ENCODE measurements at regions of chr1 and their contacts with region 1.

Region 1: GRCh38 chr1:184716158-184716557 is 38.5 kb downstream of the EDEM3 start:
- DNase-seq: no peak
- H3K4me3 ChIP-seq: no peak overlapping the region
- H3K27ac ChIP-seq: no peak overlapping the region
- H3K4me1 ChIP-seq: no peaks in the 10 kb centered on the region
- H3K27me3 ChIP-seq: no peaks in the 10 kb centered on the region
- CTCF ChIP-seq: no peak
- EP300 ChIP-seq: no peak
- POLR2A ChIP-seq: no peak

Region 2: GRCh38 chr1:184691719-184692324 is 24.3 kb before region 1 on chr1:
- intact Hi-C with region 1: loop called in 1 of 4 experiments (anchors 1 kb)
- DNase-seq: no peak
- H3K4me3 ChIP-seq: no peak overlapping the region
- H3K27ac ChIP-seq: no peak overlapping the region
- H3K4me1 ChIP-seq: no peaks in the 10 kb centered on the region
- H3K27me3 ChIP-seq: no peaks in the 10 kb centered on the region
- CTCF ChIP-seq: peak; percentile 43 to 62 (median 61)
- EP300 ChIP-seq: no peak
- POLR2A ChIP-seq: no peak